Activated T-helper 1 cell treated with anti-CD3 and anti-CD28 coated beads, Interleukin-12 subunit alpha, Interleukin-12 subunit beta, Interleukin-2, Interleukin-4 antibody, amounts not matched to agents 30 ng/mL and 10 ng/mL and 1 ng/mL, durations not matched to agents 14 hours and 24 hours and 36 hours (primary cell): ENCODE measurements at regions of chr1 and their contacts with region 1.

Region 1: GRCh38 chr1:234499119-234499942 is 20.4 kb upstream of the TARBP1 start:
- DNase-seq: peak; percentile 78
- H3K4me3 Mint-ChIP-seq: no peak overlapping the region
- H3K27ac Mint-ChIP-seq: peak overlapping the region; percentile 80
- H3K4me1 Mint-ChIP-seq: peaks cover 83% of the 10 kb centered on the region
- H3K27me3 Mint-ChIP-seq: no peaks in the 10 kb centered on the region

Region 2: DNA sequence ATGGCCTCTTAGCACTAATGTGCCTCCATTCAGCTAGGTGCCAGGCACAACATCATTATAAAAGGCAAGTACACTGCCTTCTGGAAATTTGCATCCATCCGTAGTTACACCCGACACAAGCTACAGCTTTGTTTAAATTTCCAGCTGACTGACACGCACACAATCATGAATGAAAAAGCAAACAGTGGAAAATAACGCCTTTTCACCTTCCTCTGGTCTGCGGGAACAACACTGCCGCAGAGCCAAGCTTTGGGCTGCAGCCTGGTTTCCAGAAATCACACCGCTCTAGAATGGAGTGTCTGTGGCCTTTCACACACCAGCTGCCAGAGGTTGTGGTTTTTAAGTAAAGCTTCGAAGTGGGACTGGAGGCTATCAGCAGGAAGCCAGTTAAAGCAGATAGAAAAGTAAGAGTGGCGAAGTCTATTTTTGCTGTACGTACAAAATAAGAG is 268.9 kb before region 1 on chr1:
- intact Hi-C with region 1: no loop called
- DNase-seq: peak; percentile 13
- H3K4me3 Mint-ChIP-seq: peak overlapping the region; percentile 5
- H3K27ac Mint-ChIP-seq: peak overlapping the region; percentile 49
- H3K4me1 Mint-ChIP-seq: peaks cover 16% of the 10 kb centered on the region
- H3K27me3 Mint-ChIP-seq: peaks cover 40% of the 10 kb centered on the region

Region 3: GRCh38 chr1:234486498-234487448 is 12.6 kb before region 1 on chr1:
- intact Hi-C with region 1: loop called (anchors 1 kb)
- DNase-seq: peak; percentile 31
- H3K4me3 Mint-ChIP-seq: peak overlapping the region; percentile 34
- H3K27ac Mint-ChIP-seq: peak overlapping the region; percentile 97
- H3K4me1 Mint-ChIP-seq: peaks cover 49% of the 10 kb centered on the region
- H3K27me3 Mint-ChIP-seq: peaks cover 16% of the 10 kb centered on the region

Region 4: DNA sequence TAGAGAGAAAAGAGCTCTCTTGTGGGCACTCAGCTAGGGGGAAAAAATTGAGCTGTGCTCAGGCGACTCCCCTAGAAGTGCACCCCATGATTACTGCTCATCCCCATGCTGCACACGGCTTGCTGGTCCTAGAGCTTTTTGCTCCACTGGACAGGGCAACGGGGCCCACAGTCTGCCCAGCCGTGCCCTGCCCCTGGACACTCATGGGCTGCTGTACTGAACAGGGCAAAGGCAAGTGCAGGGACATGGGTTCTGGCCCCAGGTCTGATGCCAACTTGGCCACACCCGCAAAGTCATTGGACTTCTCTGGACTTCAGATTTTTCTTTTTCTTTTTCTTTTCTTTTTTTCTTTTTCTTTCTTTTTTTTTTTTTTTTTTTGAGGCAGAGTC is 22.5 kb after region 1 on chr1:
- intact Hi-C with region 1: loop called (anchors 1 kb)
- DNase-seq: no peak
- H3K4me3 Mint-ChIP-seq: no peak overlapping the region
- H3K27ac Mint-ChIP-seq: peak overlapping the region; percentile 14
- H3K4me1 Mint-ChIP-seq: peaks cover 22% of the 10 kb centered on the region
- H3K27me3 Mint-ChIP-seq: no peaks in the 10 kb centered on the region

Region 5: DNA sequence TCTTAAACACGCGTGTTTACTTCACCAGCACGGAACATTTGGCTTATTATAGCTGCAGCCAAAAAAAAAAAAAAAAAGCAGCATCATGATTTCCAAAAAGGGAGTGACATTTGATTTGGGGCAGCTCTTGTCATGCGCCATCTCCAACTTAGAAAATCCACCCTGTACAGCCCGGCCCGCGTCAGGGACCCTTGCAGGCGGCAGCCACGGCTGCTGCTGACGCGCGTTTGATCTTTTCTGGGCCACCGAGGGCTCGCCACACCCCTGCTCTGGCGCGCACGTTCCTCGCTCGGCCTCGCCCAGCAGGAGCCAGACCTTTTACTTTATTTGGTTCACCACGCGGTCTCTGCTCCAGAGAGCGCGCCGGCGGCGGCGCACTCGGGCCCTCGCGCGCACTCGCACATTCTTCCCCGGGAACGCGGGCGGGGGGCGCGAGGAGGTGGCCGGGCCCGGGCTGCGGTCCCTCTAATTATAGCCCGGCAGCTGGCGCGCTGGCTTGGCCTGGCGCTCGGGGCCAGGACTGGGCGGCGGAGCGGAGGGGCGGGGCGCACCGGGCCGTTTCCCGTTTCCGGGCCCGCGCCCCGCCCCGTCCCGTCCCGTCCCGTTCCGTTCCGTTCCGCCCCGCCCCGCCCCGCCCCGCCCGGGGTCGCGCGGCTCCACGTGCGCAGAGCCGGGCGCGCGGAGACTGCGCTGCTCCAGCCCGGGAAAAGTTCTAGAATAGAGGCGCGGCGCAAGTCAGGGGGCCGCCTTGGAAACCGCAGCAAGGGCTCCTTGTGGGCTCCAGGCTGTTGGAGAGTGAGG is 100.5 kb after region 1 on chr1:
- intact Hi-C with region 1: loop called (anchors 1 kb)
- DNase-seq: peak; percentile 69
- H3K4me3 Mint-ChIP-seq: peak overlapping the region; percentile 88
- H3K27ac Mint-ChIP-seq: peak overlapping the region; percentile 96
- H3K4me1 Mint-ChIP-seq: peaks cover 56% of the 10 kb centered on the region
- H3K27me3 Mint-ChIP-seq: no peaks in the 10 kb centered on the region

Region 6: DNA sequence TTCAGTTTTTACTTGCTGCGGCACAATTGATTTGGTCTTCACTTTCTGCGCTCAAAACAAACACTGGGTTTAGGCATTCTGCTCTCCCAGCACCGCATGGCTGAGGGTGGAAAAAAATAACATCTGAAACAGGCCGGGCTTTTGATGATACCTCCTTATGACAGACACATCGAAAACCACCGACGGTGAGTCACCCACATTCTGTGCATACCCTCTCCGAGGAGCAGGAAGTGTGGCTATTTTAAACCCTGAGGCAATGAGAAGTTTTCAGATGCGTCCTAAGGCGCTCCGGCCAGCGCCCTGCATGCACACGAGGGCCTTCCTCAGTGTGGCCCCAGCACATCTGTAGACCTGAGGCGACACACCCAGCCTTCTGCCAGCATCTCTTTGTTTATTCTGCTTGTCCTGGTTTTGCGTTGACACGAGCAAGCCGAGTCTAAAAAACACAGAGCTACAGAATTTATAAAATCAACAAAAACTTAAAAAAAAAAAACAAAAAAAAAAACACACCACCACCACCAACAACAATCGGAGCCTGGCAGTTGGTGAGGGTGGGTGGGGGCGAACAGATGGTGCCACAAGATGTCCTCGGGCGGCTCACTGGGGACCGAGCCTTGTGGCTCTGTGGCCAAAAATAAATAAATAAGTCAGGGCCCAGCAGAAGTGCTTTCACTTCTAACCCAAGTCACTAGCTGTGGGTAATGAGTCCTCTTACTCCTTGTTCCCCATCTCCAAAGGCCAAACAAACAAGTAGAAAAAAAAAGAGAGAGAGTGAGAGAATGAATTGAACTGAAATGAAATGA is 273.2 kb after region 1 on chr1:
- intact Hi-C with region 1: loop called (anchors 1 kb)
- DNase-seq: peak; percentile 83
- H3K4me3 Mint-ChIP-seq: peak overlapping the region; percentile 80
- H3K27ac Mint-ChIP-seq: peak overlapping the region; percentile 100
- H3K4me1 Mint-ChIP-seq: peaks cover 56% of the 10 kb centered on the region
- H3K27me3 Mint-ChIP-seq: no peaks in the 10 kb centered on the region

Region 7: GRCh38 chr1:234925440-234926263 is 426.3 kb after region 1 on chr1:
- intact Hi-C with region 1: loop called (anchors 1 kb)
- DNase-seq: peak; percentile 17
- H3K4me3 Mint-ChIP-seq: peak overlapping the region; percentile 74
- H3K27ac Mint-ChIP-seq: peak overlapping the region; percentile 97
- H3K4me1 Mint-ChIP-seq: peaks cover 64% of the 10 kb centered on the region
- H3K27me3 Mint-ChIP-seq: no peaks in the 10 kb centered on the region

Region 8: GRCh38 chr1:235050911-235051360 is 551.6 kb after region 1 on chr1:
- intact Hi-C with region 1: loop called (anchors 1 kb)
- DNase-seq: no peak
- H3K4me3 Mint-ChIP-seq: no peak overlapping the region
- H3K27ac Mint-ChIP-seq: peak overlapping the region; percentile 78
- H3K4me1 Mint-ChIP-seq: peaks cover 49% of the 10 kb centered on the region
- H3K27me3 Mint-ChIP-seq: no peaks in the 10 kb centered on the region